AG04450 (cell line): ENCODE measurements at regions of chr17 and their contacts with region 1.

Region 1: DNA sequence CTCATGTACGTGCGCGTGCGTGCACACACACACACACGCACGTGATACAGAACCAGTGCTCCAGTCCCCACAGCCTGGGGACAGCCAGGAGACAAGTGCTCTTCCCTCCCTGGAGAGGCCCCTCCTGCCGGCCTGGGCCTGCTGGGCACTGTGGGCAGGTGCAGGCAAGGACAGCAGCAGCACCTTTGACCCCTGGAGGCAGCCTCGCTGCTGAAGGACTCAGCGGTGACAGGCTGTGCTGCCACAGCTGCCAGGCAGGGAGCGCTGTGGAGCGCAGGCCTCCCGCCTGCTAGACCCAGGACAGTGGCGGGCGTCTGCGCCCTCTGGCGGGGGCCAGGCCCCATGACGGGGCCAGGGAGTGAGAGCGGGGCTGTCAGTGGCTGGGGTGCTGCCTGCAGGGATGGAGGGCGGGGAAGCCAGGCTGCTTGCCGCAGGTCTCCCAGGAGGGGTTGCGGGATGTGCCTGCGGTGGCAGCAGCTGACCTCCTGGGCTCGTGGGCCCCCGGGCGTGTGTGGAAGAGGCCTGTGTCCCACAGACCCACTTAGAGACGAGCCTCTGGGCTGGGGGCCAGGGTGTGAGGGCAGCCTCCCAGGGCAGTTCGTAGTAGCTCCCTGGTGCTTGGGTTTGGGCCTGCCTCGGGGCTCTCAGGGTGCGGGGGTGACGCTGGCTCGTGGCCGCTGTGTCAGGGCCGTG is 63.5 kb upstream of the PVALEF start:
- DNase-seq: peak; percentile 48
- H3K4me3 ChIP-seq: no peak overlapping the region
- H3K27ac ChIP-seq: no peak overlapping the region
- H3K27me3 ChIP-seq: no peaks in the 10 kb centered on the region
- CTCF ChIP-seq: peak; percentile 100

Region 2: GRCh38 chr17:80970044-80970761 is 131.6 kb before region 1 on chr17:
- CTCF ChIA-PET with region 1: no interaction called
- POLR2A ChIA-PET with region 1: no interaction called
- DNase-seq: no peak
- H3K4me3 ChIP-seq: no peak overlapping the region
- H3K27ac ChIP-seq: no peak overlapping the region
- H3K27me3 ChIP-seq: peaks cover 2% of the 10 kb centered on the region
- CTCF ChIP-seq: peak; percentile 44

Region 3: DNA sequence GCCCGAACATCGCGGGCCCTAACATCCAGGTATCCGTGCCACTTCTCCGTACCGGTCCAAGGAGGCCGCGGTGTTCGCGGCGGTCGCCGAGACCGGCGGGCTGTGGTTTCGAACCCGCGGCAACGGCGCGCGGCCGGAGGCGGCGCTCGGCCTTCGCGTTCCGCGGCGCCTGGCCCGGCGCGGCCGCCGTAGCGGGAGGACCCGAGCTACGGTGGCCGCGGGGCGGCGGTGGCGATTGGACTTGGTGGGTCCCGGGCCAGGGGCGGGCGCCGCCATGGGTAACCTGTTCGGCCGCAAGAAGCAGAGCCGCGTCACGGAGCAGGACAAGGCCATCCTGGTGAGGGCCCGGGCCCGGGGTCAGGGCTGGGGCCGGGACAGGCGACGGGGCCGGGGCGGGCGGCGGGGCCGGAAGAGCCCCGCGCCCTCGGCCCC is 110.1 kb before region 1 on chr17 and contains the start of gene CHMP6:
- CTCF ChIA-PET with region 1: interaction called, 36 read pairs
- POLR2A ChIA-PET with region 1: no interaction called
- DNase-seq: peak; percentile 23
- H3K4me3 ChIP-seq: peak within 1 kb of the TSS; percentile 70
- H3K27ac ChIP-seq: no peak within 1 kb of the TSS
- H3K27me3 ChIP-seq: no peaks in the 10 kb centered on the region
- CTCF ChIP-seq: no peak; the same call in 1 of the 2 replicates
- polyA plus RNA-seq, gene CHMP6: 25.2 and 27.3 TPM in 2 replicates

Region 4: DNA sequence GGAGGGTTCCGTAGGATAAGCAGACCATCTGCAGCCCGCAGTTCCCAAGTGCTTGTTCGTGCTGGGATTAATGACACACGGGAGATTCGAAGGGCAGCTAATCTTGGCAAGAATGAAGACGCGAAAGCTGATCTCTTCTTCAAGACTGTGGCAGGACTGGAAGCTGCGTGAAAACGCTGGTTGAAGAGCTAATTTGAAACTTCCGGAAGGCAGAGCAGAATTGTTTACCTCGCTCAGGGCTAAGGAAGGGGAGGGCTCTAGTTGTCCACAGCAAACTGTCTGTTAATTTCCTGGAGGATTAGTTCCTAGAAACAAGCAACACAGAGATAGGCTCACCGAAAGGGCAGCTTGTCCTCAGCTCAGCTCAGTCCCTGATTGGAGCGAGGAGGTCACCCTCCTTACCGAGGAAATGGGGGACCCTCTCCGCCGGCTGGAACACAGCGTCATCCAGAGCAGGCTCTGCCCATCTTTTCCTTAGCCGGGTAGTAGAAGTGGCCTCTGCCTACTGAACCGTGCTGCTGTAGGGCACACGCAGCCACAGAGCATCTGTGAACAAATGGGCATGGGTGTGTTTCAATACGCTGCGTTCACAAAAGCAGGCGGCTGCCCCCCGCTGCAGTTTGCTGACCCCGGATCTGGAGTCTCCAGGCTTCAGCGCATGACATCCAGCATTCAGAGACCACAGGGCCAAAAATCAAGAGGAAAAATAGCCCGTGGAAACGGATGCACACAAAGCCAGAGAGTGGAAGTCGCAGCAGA is 83.5 kb before region 1 on chr17:
- CTCF ChIA-PET with region 1: interaction called, 16 read pairs
- POLR2A ChIA-PET with region 1: interaction called, 3 read pairs
- DNase-seq: no peak
- H3K4me3 ChIP-seq: peak overlapping the region; percentile 47
- H3K27ac ChIP-seq: peak overlapping the region; percentile 81
- H3K27me3 ChIP-seq: no peaks in the 10 kb centered on the region
- CTCF ChIP-seq: no peak

Region 5: GRCh38 chr17:81025741-81026129 is 76.0 kb before region 1 on chr17:
- CTCF ChIA-PET with region 1: interaction called, 16 read pairs
- POLR2A ChIA-PET with region 1: interaction called, 3 read pairs
- DNase-seq: no peak
- H3K4me3 ChIP-seq: no peak overlapping the region
- H3K27ac ChIP-seq: no peak overlapping the region
- H3K27me3 ChIP-seq: peaks cover 32% of the 10 kb centered on the region
- CTCF ChIP-seq: no peak